ENCODE measurements at regions of chr10 and their contacts with region 1.

Region 1: GRCh38 chr10:93482145-93482834 is at the start of gene MYOF:
- DNase-seq: peak in 30 of 35 experiments; percentile 13 to 80 (median 36)
- ATAC-seq: peak; percentile 89 to 96 (median 91)
- H3K4me3 ChIP-seq: peak within 1 kb of the TSS; percentile 50 to 88
- H3K4me3 Mint-ChIP-seq: peak within 1 kb of the TSS; percentile 77 to 88 (median 86)
- H3K27ac ChIP-seq: no peak within 1 kb of the TSS
- H3K27ac Mint-ChIP-seq: no peak within 1 kb of the TSS
- H3K4me1 ChIP-seq: peaks cover 3 to 7% of the 10 kb centered on the region in 2 experiments
- H3K4me1 Mint-ChIP-seq: peaks cover 10 to 12% (median 12%) of the 10 kb centered on the region in 3 donors
- H3K27me3 ChIP-seq: peaks cover 8 to 10% of the 10 kb centered on the region in 2 experiments
- H3K27me3 Mint-ChIP-seq: peaks cover 21 to 28% of the 10 kb centered on the region in 2 donors
- total RNA-seq, gene MYOF: 0.65 to 1.1 (median 0.86) TPM

Region 2: DNA sequence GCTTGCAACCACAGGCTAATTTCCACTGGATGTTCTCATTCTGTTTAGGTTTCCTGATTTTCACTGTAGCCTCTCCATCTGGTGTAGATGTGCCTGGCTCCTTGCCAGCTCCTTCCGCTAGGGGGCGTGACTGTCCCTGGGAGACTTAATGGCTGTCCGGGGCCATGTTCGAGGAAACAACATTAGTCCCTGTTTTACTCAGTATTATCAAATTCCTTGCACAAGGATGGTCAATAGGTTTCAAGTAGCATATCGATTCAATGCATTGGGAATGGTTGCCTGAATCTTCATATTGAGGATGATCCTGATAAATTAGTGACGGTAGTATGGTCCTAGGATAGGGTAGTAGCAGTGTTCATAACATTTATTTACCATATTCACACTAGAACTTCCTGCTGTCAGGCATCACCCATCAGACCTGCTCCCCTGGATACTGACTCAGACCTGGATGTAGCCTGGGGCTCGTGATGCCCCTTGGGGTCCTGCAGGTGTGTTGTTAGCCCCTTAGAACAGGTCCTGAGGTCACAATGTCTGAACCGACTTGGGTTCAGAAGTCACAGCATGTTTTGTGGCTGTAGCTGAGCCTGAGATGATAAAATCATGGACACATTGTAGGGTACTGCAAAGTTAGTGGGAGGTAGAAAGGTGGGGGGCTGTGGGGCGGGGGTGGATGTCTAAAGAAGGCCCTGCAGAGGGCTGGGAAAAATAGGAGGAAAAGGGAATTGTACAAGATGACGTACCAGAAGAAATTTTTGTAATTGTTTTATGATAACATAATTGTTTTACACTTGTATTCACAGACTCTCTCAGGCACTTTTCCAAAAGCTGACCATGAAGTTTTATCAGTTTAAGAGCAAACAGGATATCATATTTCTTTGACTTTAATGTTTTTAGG is 642.9 kb before region 1 on chr10:
- CTCF ChIA-PET with region 1: interaction called in 1 of 2 experiments, 10 read pairs
- POLR2A ChIA-PET with region 1: no interaction called
- DNase-seq: peak in 26 of 35 experiments; percentile 8 to 53 (median 27)
- ATAC-seq: no peak
- H3K4me3 ChIP-seq: no peak overlapping the region
- H3K4me3 Mint-ChIP-seq: no peak overlapping the region
- H3K27ac ChIP-seq: no peak overlapping the region
- H3K27ac Mint-ChIP-seq: no peak overlapping the region
- H3K4me1 ChIP-seq: peaks cover 0 to 2% of the 10 kb centered on the region in 2 experiments
- H3K4me1 Mint-ChIP-seq: peaks cover 2 to 5% (median 4%) of the 10 kb centered on the region in 3 donors
- H3K27me3 ChIP-seq: no peaks in the 10 kb centered on the region
- H3K27me3 Mint-ChIP-seq: no peaks in the 10 kb centered on the region

Region 3: GRCh38 chr10:93152136-93152535 is 330.2 kb before region 1 on chr10:
- CTCF ChIA-PET with region 1: no interaction called
- POLR2A ChIA-PET with region 1: no interaction called
- DNase-seq: no peak
- ATAC-seq: no peak
- H3K4me3 ChIP-seq: no peak overlapping the region
- H3K4me3 Mint-ChIP-seq: no peak overlapping the region
- H3K27ac ChIP-seq: no peak overlapping the region
- H3K27ac Mint-ChIP-seq: no peak overlapping the region
- H3K4me1 ChIP-seq: peaks cover 14 to 15% of the 10 kb centered on the region in 2 experiments
- H3K4me1 Mint-ChIP-seq: peaks cover 21 to 22% (median 21%) of the 10 kb centered on the region in 3 donors
- H3K27me3 ChIP-seq: peaks cover 5 to 12% of the 10 kb centered on the region in 2 experiments
- H3K27me3 Mint-ChIP-seq: peaks cover 5 to 9% of the 10 kb centered on the region in 2 donors

Region 4: DNA sequence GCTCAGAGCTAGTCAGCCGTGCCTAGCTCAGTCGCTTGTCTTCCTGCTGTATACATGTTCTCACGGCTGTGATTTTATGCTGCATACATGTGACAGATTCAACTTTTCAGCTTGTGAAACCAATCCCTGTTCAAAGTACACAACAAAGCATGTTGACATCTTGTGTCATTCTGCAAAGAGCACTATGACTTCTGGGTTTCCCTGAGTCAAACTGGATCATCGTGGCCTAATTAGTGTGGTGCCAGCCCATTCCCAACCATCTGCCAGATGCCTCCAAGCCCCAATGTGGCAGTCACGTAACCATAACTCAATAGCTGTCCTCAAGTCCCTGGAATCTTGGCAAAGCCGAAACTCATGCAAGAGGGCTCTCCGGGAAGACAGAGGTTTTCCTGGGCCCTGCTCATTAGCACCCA is 145.0 kb before region 1 on chr10:
- CTCF ChIA-PET with region 1: no interaction called
- POLR2A ChIA-PET with region 1: no interaction called
- DNase-seq: no peak
- ATAC-seq: no peak
- H3K4me3 ChIP-seq: no peak overlapping the region
- H3K4me3 Mint-ChIP-seq: no peak overlapping the region
- H3K27ac ChIP-seq: no peak overlapping the region
- H3K27ac Mint-ChIP-seq: no peak overlapping the region
- H3K4me1 ChIP-seq: no peaks in the 10 kb centered on the region
- H3K4me1 Mint-ChIP-seq: no peaks in the 10 kb centered on the region
- H3K27me3 ChIP-seq: peaks cover 2 to 3% of the 10 kb centered on the region in 2 experiments
- H3K27me3 Mint-ChIP-seq: peaks cover 3 to 5% of the 10 kb centered on the region in 2 donors

Region 5: DNA sequence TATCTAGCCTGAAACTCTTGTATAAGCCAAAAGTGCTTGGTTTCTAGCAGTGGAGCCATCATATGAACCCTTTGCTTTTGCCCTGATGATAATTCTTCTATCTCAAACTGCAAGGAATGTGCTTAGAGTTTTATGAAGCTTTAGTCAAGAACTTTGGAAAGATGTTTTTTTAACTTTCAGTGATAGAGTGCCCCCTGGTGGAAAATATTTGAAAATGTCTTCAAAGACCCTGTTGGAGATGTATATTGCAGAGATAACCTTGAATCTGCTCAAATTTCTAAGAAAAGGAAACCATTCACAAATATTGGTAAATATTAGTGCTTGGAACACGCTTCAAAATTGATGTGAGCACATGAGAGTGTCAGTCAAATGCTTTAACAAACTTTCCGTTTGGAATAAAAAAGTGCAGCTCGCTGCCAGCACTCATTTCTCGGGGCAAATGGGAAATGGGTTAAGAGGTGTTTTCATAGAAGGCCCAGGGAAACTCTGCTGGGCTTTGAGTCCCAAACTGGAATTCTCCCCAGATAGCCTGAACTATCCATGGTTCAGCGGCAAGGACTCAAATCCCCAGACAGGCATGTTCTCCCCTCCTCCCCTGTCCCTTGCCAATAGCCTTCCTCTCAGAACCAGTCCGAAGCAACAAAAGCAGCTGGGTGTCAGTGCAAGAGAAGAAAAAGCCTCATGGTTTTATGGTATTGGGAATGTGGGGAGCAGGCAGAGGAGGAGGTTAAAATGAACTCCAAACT is 129.5 kb before region 1 on chr10:
- CTCF ChIA-PET with region 1: interaction called in 1 of 2 experiments, 12 read pairs
- POLR2A ChIA-PET with region 1: no interaction called
- DNase-seq: peak in 2 of 35 experiments; percentile 4 to 58
- ATAC-seq: no peak
- H3K4me3 ChIP-seq: no peak overlapping the region
- H3K4me3 Mint-ChIP-seq: no peak overlapping the region
- H3K27ac ChIP-seq: no peak overlapping the region
- H3K27ac Mint-ChIP-seq: no peak overlapping the region
- H3K4me1 ChIP-seq: no peaks in the 10 kb centered on the region
- H3K4me1 Mint-ChIP-seq: peaks cover 0 to 4% (median 0%) of the 10 kb centered on the region in 3 donors
- H3K27me3 ChIP-seq: peaks cover 0 to 3% of the 10 kb centered on the region in 2 experiments
- H3K27me3 Mint-ChIP-seq: peaks cover 9 to 14% of the 10 kb centered on the region in 2 donors

Region 6: GRCh38 chr10:93368210-93368609 is 114.1 kb before region 1 on chr10:
- CTCF ChIA-PET with region 1: interaction called, 15 to 182 read pairs
- POLR2A ChIA-PET with region 1: interaction called in 1 of 2 experiments, 5 read pairs
- DNase-seq: no peak
- ATAC-seq: no peak
- H3K4me3 ChIP-seq: no peak overlapping the region
- H3K4me3 Mint-ChIP-seq: no peak overlapping the region
- H3K27ac ChIP-seq: no peak overlapping the region
- H3K27ac Mint-ChIP-seq: no peak overlapping the region
- H3K4me1 ChIP-seq: no peaks in the 10 kb centered on the region
- H3K4me1 Mint-ChIP-seq: peaks cover 0 to 3% (median 3%) of the 10 kb centered on the region in 3 donors
- H3K27me3 ChIP-seq: peaks cover 0 to 4% of the 10 kb centered on the region in 2 experiments
- H3K27me3 Mint-ChIP-seq: peaks cover 0 to 1% of the 10 kb centered on the region in 2 donors

Region 7: GRCh38 chr10:93386631-93387369 is 95.5 kb before region 1 on chr10:
- CTCF ChIA-PET with region 1: interaction called, 7 to 13 read pairs
- POLR2A ChIA-PET with region 1: interaction called in 1 of 2 experiments, 3 read pairs
- DNase-seq: peak in 4 of 35 experiments; percentile 0 to 21 (median 7)
- ATAC-seq: peak in 1 of 4 experiments; percentile 27
- H3K4me3 ChIP-seq: no peak overlapping the region
- H3K4me3 Mint-ChIP-seq: peak overlapping the region; percentile 6 to 22 (median 8)
- H3K27ac ChIP-seq: peak overlapping the region; percentile 40
- H3K27ac Mint-ChIP-seq: peak overlapping the region; percentile 53 to 65
- H3K4me1 ChIP-seq: peaks cover 2 to 14% of the 10 kb centered on the region in 2 experiments
- H3K4me1 Mint-ChIP-seq: peaks cover 21 to 23% (median 22%) of the 10 kb centered on the region in 3 donors
- H3K27me3 ChIP-seq: no peaks in the 10 kb centered on the region
- H3K27me3 Mint-ChIP-seq: peaks cover 0 to 3% of the 10 kb centered on the region in 2 donors

Region 8: DNA sequence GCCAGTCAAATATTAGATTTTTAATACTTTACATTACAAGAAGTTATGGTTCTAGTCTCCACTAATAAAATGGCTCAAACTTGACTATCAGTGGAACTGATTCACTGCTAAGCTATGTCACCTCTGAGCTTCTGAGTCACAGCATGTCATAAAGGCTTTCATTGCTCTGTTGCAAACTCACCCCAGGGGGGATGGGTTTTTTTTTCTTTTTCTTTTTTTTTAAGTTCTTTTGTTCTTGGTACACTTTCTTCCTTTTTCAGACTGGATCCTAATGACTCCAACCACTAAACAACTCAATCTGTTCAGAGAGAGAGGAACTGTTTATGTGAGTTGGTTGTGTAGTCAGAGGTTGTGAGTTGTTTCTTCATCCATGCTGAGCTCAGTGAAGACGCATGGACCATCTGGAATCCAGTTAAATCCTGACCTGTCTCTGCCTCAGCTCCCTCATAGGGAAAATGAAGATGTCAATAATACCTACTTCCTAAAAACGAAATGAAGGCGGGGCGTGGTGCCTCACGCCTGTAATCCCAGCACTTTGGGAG is 11.1 kb before region 1 on chr10:
- CTCF ChIA-PET with region 1: interaction called, 3 to 11 read pairs
- POLR2A ChIA-PET with region 1: interaction called in 1 of 2 experiments, 3 read pairs
- DNase-seq: no peak
- ATAC-seq: no peak
- H3K4me3 ChIP-seq: no peak overlapping the region
- H3K4me3 Mint-ChIP-seq: no peak overlapping the region
- H3K27ac ChIP-seq: no peak overlapping the region
- H3K27ac Mint-ChIP-seq: no peak overlapping the region
- H3K4me1 ChIP-seq: no peaks in the 10 kb centered on the region
- H3K4me1 Mint-ChIP-seq: no peaks in the 10 kb centered on the region
- H3K27me3 ChIP-seq: no peaks in the 10 kb centered on the region
- H3K27me3 Mint-ChIP-seq: no peaks in the 10 kb centered on the region

Region 9: DNA sequence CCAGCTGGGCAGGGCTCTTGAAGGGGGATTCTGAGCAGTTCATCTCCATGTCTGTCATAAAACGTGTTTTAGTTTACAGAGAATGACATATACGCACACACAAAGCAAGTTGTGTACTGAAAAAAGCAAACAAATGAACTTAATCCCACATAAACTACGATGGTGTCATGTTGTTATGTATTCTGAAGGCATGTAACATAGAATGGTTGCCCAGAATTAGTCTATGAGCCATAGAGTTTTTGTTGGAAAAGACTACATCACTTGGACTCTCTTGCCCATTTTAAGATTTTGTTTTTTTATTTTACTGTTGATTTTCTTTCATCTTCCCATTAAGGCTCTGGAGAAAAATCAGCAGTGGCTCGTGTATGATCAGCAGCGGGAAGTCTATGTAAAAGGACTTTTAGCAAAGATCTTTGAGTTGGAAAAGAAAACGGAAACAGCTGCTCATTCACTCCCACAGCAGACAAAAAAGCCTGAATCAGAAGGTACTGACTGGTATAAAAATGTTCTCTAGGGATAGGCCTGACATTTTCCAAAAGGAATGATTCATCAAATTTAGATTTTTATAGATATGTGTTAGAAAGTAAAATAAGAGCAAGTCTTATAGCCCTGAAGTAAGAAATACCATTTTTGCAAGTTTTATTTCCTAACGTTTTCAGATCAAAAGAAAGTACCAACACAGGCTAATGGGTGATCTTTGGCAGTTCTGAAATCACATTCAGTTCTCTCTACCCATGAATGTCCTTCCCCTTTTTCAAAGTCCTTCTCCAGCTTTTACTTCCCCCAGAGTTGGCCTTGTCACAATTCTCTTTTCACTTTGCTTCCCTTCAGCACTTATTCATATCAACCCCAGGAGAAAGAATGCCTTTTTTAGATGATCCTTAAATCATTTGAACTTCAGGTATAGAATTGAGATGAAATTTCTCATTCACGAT is 33.0 kb after region 1 on chr10:
- CTCF ChIA-PET with region 1: interaction called, 3 to 18 read pairs
- POLR2A ChIA-PET with region 1: no interaction called
- DNase-seq: no peak
- ATAC-seq: no peak
- H3K4me3 ChIP-seq: no peak overlapping the region
- H3K4me3 Mint-ChIP-seq: no peak overlapping the region
- H3K27ac ChIP-seq: no peak overlapping the region
- H3K27ac Mint-ChIP-seq: no peak overlapping the region
- H3K4me1 ChIP-seq: no peaks in the 10 kb centered on the region
- H3K4me1 Mint-ChIP-seq: peaks cover 0 to 5% (median 0%) of the 10 kb centered on the region in 3 donors
- H3K27me3 ChIP-seq: no peaks in the 10 kb centered on the region
- H3K27me3 Mint-ChIP-seq: no peaks in the 10 kb centered on the region

Measured in T-cell (primary cell).